Mammary epithelial cell (primary cell): ENCODE measurements at regions of chr1 and their contacts with region 1.

Region 1: DNA sequence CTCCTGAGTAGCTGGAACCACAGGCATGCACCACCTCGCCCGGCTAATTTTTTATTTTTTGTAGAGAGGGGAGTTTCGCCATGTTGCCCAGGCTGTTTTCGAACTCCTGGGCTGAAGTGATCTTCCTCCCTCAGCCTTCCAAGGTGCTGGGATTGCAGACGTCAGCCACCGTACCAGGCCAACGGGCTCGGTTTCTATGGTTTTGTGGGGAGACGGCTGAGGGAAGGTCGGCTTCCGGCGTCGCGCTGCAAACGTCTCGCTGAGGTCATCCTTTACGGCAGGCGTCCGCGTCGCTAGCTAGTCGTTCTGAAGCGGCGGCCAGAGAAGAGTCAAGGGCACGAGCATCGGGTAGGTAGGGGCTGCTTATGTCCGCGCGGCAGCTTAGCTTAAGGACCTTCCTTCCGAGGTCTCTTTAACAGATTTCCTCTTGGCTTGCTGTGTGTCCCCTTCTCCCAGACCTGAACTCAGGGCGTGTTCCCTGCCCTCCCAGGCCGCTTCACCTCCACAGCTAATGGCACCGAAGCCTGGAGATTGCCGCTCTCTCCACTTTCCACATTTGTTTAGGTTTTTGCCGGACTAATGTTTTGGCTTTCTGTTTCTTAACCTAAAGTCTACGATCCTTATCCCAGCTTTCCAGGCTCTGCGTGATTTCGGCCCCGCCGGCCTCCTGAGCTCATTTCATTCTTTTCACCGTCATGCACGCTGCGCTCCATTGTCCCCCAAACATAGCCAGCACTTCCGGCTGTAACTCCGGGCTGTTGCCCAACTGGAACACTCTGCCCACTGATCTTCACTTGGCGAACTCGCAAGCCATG is at the start of gene NDUFS5:
- DNase-seq: peak; percentile 90
- H3K4me3 ChIP-seq: peak within 1 kb of the TSS; percentile 70 to 85 (median 78)
- H3K27ac ChIP-seq: peak within 1 kb of the TSS; percentile 98
- H3K4me1 ChIP-seq: peaks cover 9% of the 10 kb centered on the region
- H3K27me3 ChIP-seq: no peaks in the 10 kb centered on the region
- CTCF ChIP-seq: no peak
- total RNA-seq, gene NDUFS5: 204 to 259 TPM

Region 2: GRCh38 chr1:38859561-38860453 is 166.5 kb before region 1 on chr1 and contains the start of gene RRAGC:
- CTCF ChIA-PET with region 1: no interaction called
- dilution Hi-C with region 1: no loop called
- in situ Hi-C with region 1: no loop called
- intact Hi-C with region 1: loop called (anchors 1 kb)
- DNase-seq: peak; percentile 98
- H3K4me3 ChIP-seq: peak within 1 kb of the TSS; percentile 84 to 89 (median 87)
- H3K27ac ChIP-seq: peak within 1 kb of the TSS; percentile 89
- H3K4me1 ChIP-seq: peaks cover 12% of the 10 kb centered on the region
- H3K27me3 ChIP-seq: no peaks in the 10 kb centered on the region
- CTCF ChIP-seq: no peak
- total RNA-seq, gene RRAGC: 21.8 to 36.9 TPM

Region 3: DNA sequence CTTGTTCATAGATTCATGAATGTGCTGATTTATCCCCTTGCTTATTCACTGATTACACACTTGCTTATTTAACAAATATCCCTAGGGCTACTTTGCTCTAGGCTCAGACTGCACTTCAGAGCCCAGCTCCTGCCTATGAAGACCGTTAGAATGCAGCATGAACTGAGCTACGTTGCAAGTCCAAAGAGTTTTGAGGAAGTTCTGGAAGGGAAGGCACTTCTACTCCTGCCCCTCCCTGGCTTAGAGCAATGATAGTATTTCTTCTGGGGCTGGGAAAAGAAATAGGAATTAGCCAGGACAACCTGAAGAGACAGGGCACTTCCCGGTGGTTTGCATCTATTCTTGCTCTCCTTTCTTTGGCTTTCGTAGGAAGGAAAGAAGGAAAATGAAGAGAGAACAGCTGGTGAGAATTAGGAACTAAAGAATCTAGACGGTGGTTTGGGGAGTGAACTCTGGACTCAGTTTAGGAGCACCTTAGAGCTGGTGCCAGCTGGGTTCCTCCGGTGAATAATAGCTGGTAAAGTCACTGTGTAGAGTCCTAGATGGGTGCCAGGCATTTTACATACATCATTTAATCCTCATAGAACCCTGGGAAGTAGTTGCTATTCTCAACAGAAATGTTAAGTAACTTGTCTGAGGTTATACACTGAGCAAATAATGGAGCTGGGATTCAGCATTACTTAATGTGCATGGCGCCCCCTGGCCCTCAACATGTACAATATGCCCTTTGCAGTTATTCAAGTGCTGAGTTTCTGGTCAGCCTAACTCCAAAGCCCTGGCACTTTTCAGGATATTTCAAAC is 65.8 kb after region 1 on chr1:
- CTCF ChIA-PET with region 1: interaction called, 3 read pairs
- dilution Hi-C with region 1: no loop called
- in situ Hi-C with region 1: no loop called
- intact Hi-C with region 1: loop called (anchors 2 kb)
- DNase-seq: peak; percentile 54
- H3K4me3 ChIP-seq: no peak overlapping the region
- H3K27ac ChIP-seq: no peak overlapping the region
- H3K4me1 ChIP-seq: peaks cover 14% of the 10 kb centered on the region
- H3K27me3 ChIP-seq: no peaks in the 10 kb centered on the region
- CTCF ChIP-seq: peak; percentile 79 to 82

Region 4: GRCh38 chr1:39214998-39215873 is 189.0 kb after region 1 on chr1:
- CTCF ChIA-PET with region 1: no interaction called
- dilution Hi-C with region 1: no loop called
- in situ Hi-C with region 1: no loop called
- intact Hi-C with region 1: no loop called
- DNase-seq: peak; percentile 69
- H3K4me3 ChIP-seq: peak overlapping the region in 1 of 3 experiments; percentile 5
- H3K27ac ChIP-seq: peak overlapping the region; percentile 68
- H3K4me1 ChIP-seq: peaks cover 52% of the 10 kb centered on the region
- H3K27me3 ChIP-seq: no peaks in the 10 kb centered on the region
- CTCF ChIP-seq: no peak